Upper lobe of right lung (tissue), 1 donor: ENCODE measurements at regions of chr6 and their contacts with region 1.

Region 1: GRCh38 chr6:83514866-83515466 is 2.6 kb downstream of the PRSS35 start:
- DNase-seq: no peak
- ATAC-seq: peak; percentile 56
- H3K4me3 ChIP-seq: no peak overlapping the region
- H3K27ac ChIP-seq: no peak overlapping the region
- H3K4me1 ChIP-seq: peaks cover 7% of the 10 kb centered on the region
- H3K27me3 ChIP-seq: peaks cover 6% of the 10 kb centered on the region
- CTCF ChIP-seq: peak; percentile 77

Region 2: GRCh38 chr6:83038246-83038645 is 476.7 kb before region 1 on chr6:
- intact Hi-C with region 1: no loop called
- DNase-seq: no peak
- ATAC-seq: no peak
- H3K4me3 ChIP-seq: no peak overlapping the region
- H3K27ac ChIP-seq: no peak overlapping the region
- H3K4me1 ChIP-seq: no peaks in the 10 kb centered on the region
- H3K27me3 ChIP-seq: no peaks in the 10 kb centered on the region
- CTCF ChIP-seq: no peak

Region 3: DNA sequence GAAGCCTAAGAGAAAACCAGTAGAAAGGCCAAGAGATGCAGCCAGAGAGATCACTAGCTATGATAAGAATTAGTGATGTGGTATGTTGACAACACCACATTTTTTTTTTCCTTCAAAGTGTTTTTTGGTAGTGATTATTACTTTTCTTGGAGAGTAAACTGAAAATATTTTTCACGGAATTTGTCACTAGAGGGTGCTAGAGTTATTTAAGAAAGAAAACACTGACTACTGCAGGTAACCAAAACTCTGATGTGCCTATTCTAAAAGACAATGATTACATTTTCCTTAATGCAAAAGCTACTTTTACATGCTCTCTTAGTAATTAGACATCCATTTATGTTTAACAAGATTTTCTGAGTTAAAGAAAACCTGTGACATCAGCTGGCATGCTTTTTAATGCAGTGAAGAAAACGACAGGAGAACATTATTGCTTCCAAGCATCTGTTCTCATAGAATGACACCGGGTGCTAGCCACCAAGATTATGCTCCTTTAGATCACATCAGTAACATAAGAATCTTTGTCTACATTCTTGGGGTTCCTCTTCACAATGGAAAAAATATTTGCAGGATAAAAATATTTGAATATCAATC is 293.0 kb before region 1 on chr6:
- intact Hi-C with region 1: loop called (anchors 10 kb)
- DNase-seq: no peak
- ATAC-seq: no peak
- H3K4me3 ChIP-seq: no peak overlapping the region
- H3K27ac ChIP-seq: no peak overlapping the region
- H3K4me1 ChIP-seq: no peaks in the 10 kb centered on the region
- H3K27me3 ChIP-seq: no peaks in the 10 kb centered on the region
- CTCF ChIP-seq: peak; percentile 50

Region 4: GRCh38 chr6:83424392-83425018 is 90.5 kb before region 1 on chr6:
- intact Hi-C with region 1: loop called (anchors 5 kb)
- DNase-seq: no peak
- ATAC-seq: no peak
- H3K4me3 ChIP-seq: no peak overlapping the region
- H3K27ac ChIP-seq: no peak overlapping the region
- H3K4me1 ChIP-seq: no peaks in the 10 kb centered on the region
- H3K27me3 ChIP-seq: no peaks in the 10 kb centered on the region
- CTCF ChIP-seq: no peak

Region 5: DNA sequence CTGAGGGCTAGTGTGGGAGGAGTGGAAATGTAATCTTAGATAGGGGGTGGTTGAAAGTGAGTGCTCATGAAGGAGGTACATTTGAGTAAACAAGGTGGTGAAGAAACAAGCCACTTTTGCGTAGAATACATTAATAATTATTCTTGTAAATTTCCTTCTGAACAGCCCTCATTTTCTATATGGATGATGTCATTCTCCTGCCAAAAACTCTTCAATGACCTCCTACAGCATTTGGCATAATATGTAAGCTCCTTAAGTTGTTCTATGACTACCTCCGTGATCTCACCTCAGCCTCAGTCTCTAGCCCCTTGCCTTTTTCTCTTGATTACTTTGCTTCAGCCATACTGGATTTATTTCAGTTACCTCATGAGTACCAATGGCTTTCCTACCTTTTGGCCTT is 207.9 kb after region 1 on chr6:
- intact Hi-C with region 1: no loop called
- DNase-seq: no peak
- ATAC-seq: no peak
- H3K4me3 ChIP-seq: no peak overlapping the region
- H3K27ac ChIP-seq: no peak overlapping the region
- H3K4me1 ChIP-seq: no peaks in the 10 kb centered on the region
- H3K27me3 ChIP-seq: no peaks in the 10 kb centered on the region
- CTCF ChIP-seq: no peak